ENCODE measurements at regions of chr9 and their contacts with region 1.

Region 1: DNA sequence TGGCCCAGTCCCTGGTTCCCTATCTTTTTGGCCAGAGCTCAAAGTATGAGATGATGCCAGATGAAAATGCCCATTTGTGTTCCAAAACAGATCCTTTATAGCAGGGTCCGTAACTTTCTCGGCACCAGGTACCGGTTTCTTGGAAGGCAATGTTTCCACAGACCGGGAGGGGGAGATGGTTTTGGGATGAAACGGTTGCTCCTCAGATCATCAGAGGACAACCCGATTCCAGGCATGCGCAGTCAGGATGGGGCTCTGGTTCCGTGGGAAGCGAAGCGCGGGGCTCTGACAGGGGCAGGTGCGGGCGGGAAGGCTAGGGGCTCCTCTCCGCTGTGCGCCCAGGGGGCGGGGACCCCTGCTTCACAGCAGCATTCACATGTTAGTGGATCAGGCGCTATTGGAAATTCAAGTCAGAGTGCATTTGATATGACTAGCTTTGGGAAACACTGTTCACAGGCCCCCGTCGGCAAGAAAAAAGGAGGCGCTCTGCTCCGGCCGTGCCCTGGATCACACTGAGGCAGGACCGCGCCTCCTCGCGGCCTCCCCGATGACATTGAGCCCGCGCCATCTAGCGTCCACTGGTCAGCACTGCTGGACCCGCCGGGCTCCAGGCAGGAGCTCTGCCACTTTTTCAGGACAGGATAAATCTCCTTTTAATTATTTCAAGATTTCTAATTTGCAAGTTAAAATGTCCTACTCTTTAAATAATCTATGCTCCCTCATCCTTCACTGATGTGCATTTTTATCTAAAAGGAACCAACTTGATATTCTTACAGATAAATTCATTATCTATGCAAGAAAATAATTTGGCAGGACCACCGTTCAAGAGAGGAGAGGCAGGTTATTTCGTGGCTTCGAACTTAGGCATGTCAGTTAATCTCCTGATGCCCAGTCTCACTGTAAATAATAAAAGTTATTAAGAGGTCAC is 190.0 kb downstream of the FANCC start:
- DNase-seq: peak; percentile 89 to 92
- H3K4me3 ChIP-seq: no peak overlapping the region
- H3K27ac ChIP-seq: peak overlapping the region in 1 of 3 donors; percentile 17
- H3K4me1 ChIP-seq: peaks cover 7 to 15% of the 10 kb centered on the region in 2 donors
- H3K27me3 ChIP-seq: no peaks in the 10 kb centered on the region
- CTCF ChIP-seq: peak; percentile 88 to 97 (median 94)
- POLR2A ChIP-seq: no peak

Region 2: DNA sequence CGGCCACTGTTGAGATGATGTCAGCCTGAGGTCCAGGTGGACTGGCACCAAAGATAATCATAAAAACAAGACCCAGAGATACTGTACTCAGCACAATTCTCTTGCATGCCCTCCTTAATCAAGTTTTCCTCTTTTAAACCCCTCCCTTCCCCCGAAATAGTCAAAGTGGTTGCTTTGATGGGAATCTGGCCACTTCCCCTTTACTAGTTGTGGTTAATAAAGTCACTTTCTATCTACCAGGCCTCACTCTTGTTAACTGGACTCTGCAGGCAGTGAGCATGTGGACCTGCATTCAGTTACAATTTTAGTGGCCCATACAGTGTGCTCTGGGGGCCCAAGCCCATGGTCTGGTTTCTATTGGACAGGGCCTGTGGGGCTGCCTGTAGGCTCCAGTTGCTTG is 551.4 kb before region 1 on chr9:
- intact Hi-C with region 1: no loop called
- DNase-seq: no peak
- H3K4me3 ChIP-seq: no peak overlapping the region
- H3K27ac ChIP-seq: no peak overlapping the region
- H3K4me1 ChIP-seq: peaks cover 7 to 14% of the 10 kb centered on the region in 2 donors
- H3K27me3 ChIP-seq: no peaks in the 10 kb centered on the region
- CTCF ChIP-seq: no peak
- POLR2A ChIP-seq: no peak

Region 3: GRCh38 chr9:94681508-94681907 is 446.0 kb before region 1 on chr9:
- intact Hi-C with region 1: loop called (anchors 5 kb)
- DNase-seq: peak; percentile 74 to 79
- H3K4me3 ChIP-seq: no peak overlapping the region
- H3K27ac ChIP-seq: peak overlapping the region in 1 of 3 donors; percentile 31
- H3K4me1 ChIP-seq: no peaks in the 10 kb centered on the region
- H3K27me3 ChIP-seq: no peaks in the 10 kb centered on the region
- CTCF ChIP-seq: peak; percentile 23 to 79 (median 74)
- POLR2A ChIP-seq: no peak

Region 4: DNA sequence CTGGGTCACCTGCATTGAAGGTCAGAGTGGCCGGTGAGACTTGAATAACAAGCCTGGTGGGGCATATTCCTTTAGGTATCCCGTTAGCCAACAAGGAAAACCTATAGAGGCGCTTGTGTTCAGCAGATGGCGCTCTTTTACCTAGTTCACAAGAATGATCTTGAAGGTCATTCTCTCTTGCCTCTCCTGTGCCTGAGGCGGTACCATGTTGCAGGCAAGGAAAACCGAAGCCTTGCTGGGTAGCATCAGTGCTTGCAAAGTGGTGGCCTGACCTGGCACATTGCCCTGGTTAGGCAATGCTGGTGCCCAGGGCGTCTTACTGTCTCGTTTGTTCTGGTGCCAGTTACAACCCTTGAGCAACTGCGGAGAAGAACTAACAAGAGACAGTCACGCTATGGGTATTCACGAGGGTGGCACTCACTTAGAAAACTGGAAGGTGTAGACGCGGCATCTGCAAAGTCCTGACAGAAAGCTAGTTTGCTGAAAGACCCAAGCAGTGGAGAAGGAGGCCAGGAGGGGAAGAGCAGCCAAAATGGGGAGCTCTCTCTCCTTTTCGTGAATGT is 344.3 kb before region 1 on chr9:
- intact Hi-C with region 1: loop called (anchors 5 kb)
- DNase-seq: peak; percentile 97
- H3K4me3 ChIP-seq: no peak overlapping the region
- H3K27ac ChIP-seq: peak overlapping the region; percentile 27 to 36 (median 35)
- H3K4me1 ChIP-seq: peaks cover 5 to 9% of the 10 kb centered on the region in 2 donors
- H3K27me3 ChIP-seq: no peaks in the 10 kb centered on the region
- CTCF ChIP-seq: peak; percentile 21 to 87 (median 70)
- POLR2A ChIP-seq: peak in 1 of 2 donors; percentile 14

Measured in thyroid gland (tissue), 4 donors.